Breast epithelium (tissue), 4 donors: ENCODE measurements at regions of chr10 and their contacts with region 1.

Region 1: DNA sequence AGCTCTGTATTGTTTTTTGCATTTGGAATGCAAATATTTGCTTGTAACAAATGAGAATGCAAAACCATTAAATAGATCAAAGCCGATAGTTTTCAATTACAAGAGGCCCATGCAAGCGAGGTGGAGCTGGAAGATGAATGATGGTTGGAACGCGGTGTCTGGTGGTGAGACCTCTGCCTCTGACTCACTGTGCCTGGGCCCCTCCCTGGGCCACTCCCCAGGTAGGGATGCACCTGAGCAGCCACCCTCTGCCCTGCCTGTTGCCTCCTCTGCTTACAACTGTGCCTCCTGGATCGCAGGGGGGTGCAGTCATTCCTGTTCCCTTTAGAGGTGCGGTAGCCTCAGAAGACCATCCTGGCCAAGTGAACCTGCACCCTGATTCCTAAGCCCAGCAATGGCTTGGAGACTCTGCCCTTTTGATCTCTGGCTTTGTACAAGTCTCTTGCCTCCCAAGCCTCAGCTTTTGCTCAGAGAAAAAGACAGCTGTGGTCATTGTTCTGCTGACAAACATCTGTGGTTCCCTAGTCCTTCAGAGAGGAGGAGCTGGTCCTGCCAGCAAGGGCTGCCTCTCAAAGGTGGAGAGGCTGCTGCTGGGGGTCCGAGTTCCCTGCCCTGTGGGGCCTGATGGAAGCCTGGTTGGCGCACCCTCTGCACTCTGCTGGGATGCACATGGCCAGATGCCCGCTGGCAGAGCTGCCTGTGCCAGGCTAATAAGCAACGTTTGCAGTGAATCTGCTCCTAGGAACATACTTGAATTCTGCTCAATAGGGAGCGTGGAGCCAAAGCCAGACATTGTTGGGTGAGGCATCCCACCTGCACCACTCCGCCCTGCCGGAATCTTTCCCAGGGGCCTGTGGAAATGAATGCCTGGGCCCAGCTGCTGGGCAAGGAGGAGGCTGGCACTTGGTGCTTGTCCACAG is 126.3 kb upstream of the TCERG1L start:
- DNase-seq: no peak
- H3K4me3 ChIP-seq: no peak overlapping the region
- H3K27ac ChIP-seq: no peak overlapping the region
- H3K4me1 ChIP-seq: no peaks in the 10 kb centered on the region
- H3K27me3 ChIP-seq: peaks cover 0 to 44% of the 10 kb centered on the region in 2 donors
- CTCF ChIP-seq: no peak
- POLR2A ChIP-seq: no peak

Region 2: GRCh38 chr10:131238669-131239280 is 199.0 kb before region 1 on chr10:
- intact Hi-C with region 1: loop called (anchors 2 kb)
- DNase-seq: no peak
- H3K4me3 ChIP-seq: no peak overlapping the region
- H3K27ac ChIP-seq: no peak overlapping the region
- H3K4me1 ChIP-seq: no peaks in the 10 kb centered on the region
- H3K27me3 ChIP-seq: peaks cover 0 to 35% of the 10 kb centered on the region in 2 donors
- CTCF ChIP-seq: no peak
- POLR2A ChIP-seq: no peak

Region 3: GRCh38 chr10:131250454-131251145 is 187.2 kb before region 1 on chr10:
- intact Hi-C with region 1: no loop called
- DNase-seq: peak in 1 of 2 donors; percentile 48
- H3K4me3 ChIP-seq: no peak overlapping the region
- H3K27ac ChIP-seq: no peak overlapping the region
- H3K4me1 ChIP-seq: no peaks in the 10 kb centered on the region
- H3K27me3 ChIP-seq: peaks cover 0 to 47% of the 10 kb centered on the region in 2 donors
- CTCF ChIP-seq: no peak
- POLR2A ChIP-seq: no peak